Activated T-helper 1 cell treated with anti-CD3 and anti-CD28 coated beads, Interleukin-12 subunit alpha, Interleukin-12 subunit beta, Interleukin-2, Interleukin-4 antibody, amounts not matched to agents 30 ng/mL and 10 ng/mL and 1 ng/mL, durations not matched to agents 14 hours and 24 hours and 36 hours (primary cell): ENCODE measurements at regions of chr1 and their contacts with region 1.

Region 1: DNA sequence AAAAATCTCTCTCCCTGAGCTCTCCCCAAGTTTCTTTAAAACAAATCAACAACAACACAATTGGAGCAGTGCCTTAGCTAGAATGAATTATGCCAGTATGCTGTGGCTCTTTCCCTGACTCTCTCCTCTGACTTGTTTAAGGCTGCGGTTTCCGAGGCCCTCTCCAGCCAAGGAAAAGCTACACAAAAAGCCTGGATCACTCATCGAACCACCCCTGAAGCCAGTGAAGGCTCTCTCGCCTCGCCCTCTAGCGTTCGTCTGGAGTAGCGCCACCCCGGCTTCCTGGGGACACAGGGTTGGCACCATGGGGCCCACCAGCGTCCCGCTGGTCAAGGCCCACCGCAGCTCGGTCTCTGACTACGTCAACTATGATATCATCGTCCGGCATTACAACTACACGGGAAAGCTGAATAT is 1.9 kb downstream of the S1PR1 start:
- DNase-seq: peak; percentile 79
- H3K4me3 Mint-ChIP-seq: peak overlapping the region; percentile 97
- H3K27ac Mint-ChIP-seq: peak overlapping the region; percentile 95
- H3K4me1 Mint-ChIP-seq: peaks cover 77% of the 10 kb centered on the region
- H3K27me3 Mint-ChIP-seq: no peaks in the 10 kb centered on the region

Region 2: GRCh38 chr1:100895540-100896483 is 342.9 kb before region 1 on chr1 and contains the start of gene SLC30A7:
- intact Hi-C with region 1: loop called (anchors 1 kb)
- DNase-seq: peak; percentile 95
- H3K4me3 Mint-ChIP-seq: peak within 1 kb of the TSS; percentile 93
- H3K27ac Mint-ChIP-seq: peak within 1 kb of the TSS; percentile 96
- H3K4me1 Mint-ChIP-seq: peaks cover 64% of the 10 kb centered on the region
- H3K27me3 Mint-ChIP-seq: no peaks in the 10 kb centered on the region
- total RNA-seq, gene SLC30A7: 42.6 and 51.2 TPM in 2 replicates

Region 3: DNA sequence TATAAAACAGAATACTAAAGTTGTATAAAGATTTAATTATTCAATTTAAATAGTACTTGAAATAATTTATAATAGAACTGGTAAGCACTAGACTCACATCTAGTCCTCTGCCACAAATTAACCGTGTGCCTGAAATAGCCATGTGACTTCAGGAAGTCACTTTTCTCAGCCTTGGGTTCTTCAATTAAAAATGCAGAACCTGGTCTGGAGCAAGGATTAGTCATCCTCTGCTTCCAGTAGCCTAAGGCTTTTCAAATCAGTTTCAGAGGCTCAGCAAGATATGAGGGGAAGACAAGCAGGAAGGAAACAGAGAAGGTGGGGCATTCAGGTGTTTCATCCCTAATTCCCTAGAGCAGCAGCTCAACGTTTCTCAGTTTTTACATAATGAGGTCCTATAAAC is 236.1 kb before region 1 on chr1:
- intact Hi-C with region 1: loop called (anchors 5 kb)
- DNase-seq: no peak
- H3K4me3 Mint-ChIP-seq: no peak overlapping the region
- H3K27ac Mint-ChIP-seq: no peak overlapping the region
- H3K4me1 Mint-ChIP-seq: peaks cover 43% of the 10 kb centered on the region
- H3K27me3 Mint-ChIP-seq: no peaks in the 10 kb centered on the region

Region 4: GRCh38 chr1:101112051-101112780 is 126.5 kb before region 1 on chr1:
- intact Hi-C with region 1: loop called (anchors 2 kb)
- DNase-seq: peak; percentile 59
- H3K4me3 Mint-ChIP-seq: peak overlapping the region; percentile 47
- H3K27ac Mint-ChIP-seq: peak overlapping the region; percentile 77
- H3K4me1 Mint-ChIP-seq: peaks cover 40% of the 10 kb centered on the region
- H3K27me3 Mint-ChIP-seq: no peaks in the 10 kb centered on the region

Region 5: GRCh38 chr1:101198842-101199636 is 39.6 kb before region 1 on chr1:
- intact Hi-C with region 1: loop called (anchors 1 kb)
- DNase-seq: no peak
- H3K4me3 Mint-ChIP-seq: peak overlapping the region; percentile 9
- H3K27ac Mint-ChIP-seq: peak overlapping the region; percentile 85
- H3K4me1 Mint-ChIP-seq: peaks cover 35% of the 10 kb centered on the region
- H3K27me3 Mint-ChIP-seq: no peaks in the 10 kb centered on the region

Region 6: GRCh38 chr1:101253976-101254674 is 15.4 kb after region 1 on chr1:
- intact Hi-C with region 1: loop called (anchors 1 kb)
- DNase-seq: no peak
- H3K4me3 Mint-ChIP-seq: no peak overlapping the region
- H3K27ac Mint-ChIP-seq: no peak overlapping the region
- H3K4me1 Mint-ChIP-seq: peaks cover 38% of the 10 kb centered on the region
- H3K27me3 Mint-ChIP-seq: no peaks in the 10 kb centered on the region

Region 7: GRCh38 chr1:101410048-101410878 is 171.6 kb after region 1 on chr1:
- intact Hi-C with region 1: no loop called
- DNase-seq: no peak
- H3K4me3 Mint-ChIP-seq: no peak overlapping the region
- H3K27ac Mint-ChIP-seq: no peak overlapping the region
- H3K4me1 Mint-ChIP-seq: peaks cover 5% of the 10 kb centered on the region
- H3K27me3 Mint-ChIP-seq: peaks cover 19% of the 10 kb centered on the region